ENCODE measurements at regions of chr5 and their contacts with region 1.

Region 1: DNA sequence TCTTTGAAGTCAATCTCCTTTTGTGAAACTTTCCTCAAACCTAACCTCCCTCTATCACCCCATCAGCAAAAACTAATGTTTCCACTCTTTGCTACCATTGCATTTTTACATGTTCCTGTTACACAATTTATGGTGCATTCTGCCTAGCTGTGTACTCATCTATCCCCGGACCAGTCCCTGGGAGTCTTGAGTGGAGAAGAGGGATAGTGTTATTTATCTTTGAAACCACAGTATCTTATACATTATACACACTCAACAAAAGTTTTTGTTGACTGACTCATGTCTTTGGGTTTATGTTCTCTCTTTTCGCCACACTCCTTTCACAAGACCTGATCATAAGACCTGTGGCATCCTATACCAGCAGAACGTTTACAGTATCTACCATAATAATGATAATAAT is 26.4 kb downstream of the TNFAIP8 start:
- DNase-seq: no peak
- H3K4me3 ChIP-seq: no peak overlapping the region
- H3K27ac ChIP-seq: no peak overlapping the region
- H3K4me1 ChIP-seq: peaks cover 7% of the 10 kb centered on the region
- H3K27me3 ChIP-seq: no peaks in the 10 kb centered on the region
- CTCF ChIP-seq: no peak
- POLR2A ChIP-seq: no peak

Region 2: DNA sequence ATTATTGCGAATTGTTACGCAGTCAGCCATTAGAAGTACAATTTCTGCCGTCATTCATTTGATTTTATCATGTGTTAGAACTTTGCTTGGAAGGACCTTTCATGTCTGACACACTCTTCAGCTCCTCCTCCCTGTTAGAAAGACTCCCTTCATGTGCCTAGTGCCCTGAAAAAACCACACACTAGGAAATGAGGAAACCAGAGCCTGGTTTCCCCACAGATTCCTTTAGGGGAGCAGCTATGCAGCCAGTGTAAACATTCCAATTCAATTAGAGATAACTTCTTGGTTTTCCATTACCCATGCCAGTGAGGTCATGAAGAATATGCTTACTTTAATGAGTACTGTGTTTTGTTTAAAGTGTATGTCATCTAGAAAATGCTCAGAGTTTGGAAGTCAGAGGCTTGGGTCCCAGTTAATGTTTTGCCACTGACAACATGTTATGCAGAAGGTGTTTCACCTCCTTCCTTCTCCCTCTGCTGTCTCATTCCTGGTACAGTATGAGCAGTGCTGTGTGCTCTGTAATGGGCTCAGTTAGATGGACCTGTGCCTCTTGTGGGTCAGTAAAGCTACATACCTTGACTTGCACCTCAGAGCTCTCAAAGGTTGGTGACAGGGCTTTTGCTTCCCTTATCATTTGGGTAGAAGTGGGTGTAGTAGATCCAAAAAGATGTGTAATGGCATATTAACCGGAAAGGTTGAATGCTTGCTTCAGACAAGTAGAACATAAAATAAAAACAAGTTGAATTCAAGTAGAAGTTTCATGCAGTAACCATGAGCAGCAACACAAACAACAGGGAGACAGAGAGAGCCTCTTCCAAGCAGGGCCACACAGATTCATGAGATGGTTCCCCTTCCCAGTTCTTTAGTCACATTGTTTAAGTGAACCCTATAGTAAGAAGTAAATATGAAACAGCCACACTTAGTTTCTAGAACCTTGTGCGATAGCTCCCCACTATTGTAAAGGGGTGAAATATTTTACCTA is 79.0 kb before region 1 on chr5:
- CTCF ChIA-PET with region 1: no interaction called
- POLR2A ChIA-PET with region 1: no interaction called
- dilution Hi-C with region 1: no loop called
- intact Hi-C with region 1: no loop called
- DNase-seq: peak; percentile 93
- H3K4me3 ChIP-seq: no peak overlapping the region
- H3K27ac ChIP-seq: peak overlapping the region; percentile 79
- H3K4me1 ChIP-seq: peaks cover 35% of the 10 kb centered on the region
- H3K27me3 ChIP-seq: no peaks in the 10 kb centered on the region
- CTCF ChIP-seq: no peak
- POLR2A ChIP-seq: no peak

Region 3: DNA sequence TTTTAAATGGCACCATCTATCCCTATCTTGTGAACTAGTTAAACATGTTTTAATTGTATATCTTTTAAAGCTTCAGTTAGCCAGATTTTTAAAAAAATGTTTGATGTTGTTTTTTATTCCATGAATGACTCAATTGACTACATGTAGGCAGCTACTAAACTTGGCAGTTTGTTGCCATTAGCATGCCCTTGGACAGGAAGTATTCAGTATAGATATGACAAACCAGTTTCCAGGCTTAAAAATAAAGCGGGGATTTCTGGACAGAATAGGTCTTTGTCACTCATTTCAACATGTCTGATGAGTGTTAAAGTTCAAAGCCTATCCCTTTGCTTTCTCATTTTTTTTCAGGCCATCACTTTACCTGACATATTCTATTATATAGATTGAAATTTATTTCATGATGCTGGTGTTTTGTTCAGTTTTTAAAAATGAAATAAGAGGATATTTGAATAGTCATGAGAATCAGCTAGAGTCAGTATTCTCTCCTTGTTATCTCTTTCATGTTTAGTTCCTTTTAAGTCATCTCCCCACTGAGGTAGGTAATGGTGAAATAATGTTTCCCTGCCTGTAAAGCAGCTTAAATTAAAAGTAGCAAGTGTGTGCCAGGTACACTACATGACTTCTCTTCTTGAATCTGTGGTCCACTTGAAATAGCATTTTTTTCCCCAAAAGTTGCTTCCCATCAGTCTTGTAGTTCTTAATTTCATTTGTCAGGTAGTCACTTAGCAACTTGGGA is 14.5 kb before region 1 on chr5:
- CTCF ChIA-PET with region 1: interaction called, 4 read pairs
- POLR2A ChIA-PET with region 1: no interaction called
- dilution Hi-C with region 1: no loop called
- intact Hi-C with region 1: loop called (anchors 2 kb)
- DNase-seq: peak; percentile 75
- H3K4me3 ChIP-seq: no peak overlapping the region
- H3K27ac ChIP-seq: no peak overlapping the region
- H3K4me1 ChIP-seq: peaks cover 7% of the 10 kb centered on the region
- H3K27me3 ChIP-seq: no peaks in the 10 kb centered on the region
- CTCF ChIP-seq: no peak
- POLR2A ChIP-seq: no peak

Region 4: DNA sequence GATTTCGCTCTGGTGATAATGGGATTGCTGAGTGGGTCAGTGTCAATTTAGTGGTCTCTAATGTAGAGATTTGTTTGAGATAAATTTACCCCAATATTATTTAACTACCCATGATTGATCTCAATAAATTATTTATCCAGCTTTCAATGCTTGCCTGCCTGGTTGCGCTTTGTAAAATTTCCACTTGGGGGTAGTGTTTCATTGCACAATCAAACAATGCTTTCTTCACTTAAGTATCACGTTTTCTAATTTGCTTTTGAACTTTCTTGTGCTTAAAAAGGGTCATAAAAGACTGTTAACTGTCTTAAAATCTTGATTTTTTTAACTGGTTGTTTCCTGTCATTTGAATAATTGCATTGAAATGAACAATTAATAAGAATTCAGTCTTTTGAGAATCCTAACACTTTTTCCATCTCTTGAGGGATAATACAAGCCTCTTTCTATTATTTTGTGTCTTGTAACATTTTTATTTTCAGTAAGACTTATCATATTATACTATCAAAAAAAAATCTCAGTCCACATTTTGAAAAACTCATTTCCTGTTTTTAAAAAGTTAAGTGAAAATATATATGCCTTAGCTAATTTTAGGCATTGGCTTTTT is 88.8 kb after region 1 on chr5:
- CTCF ChIA-PET with region 1: no interaction called
- POLR2A ChIA-PET with region 1: no interaction called
- dilution Hi-C with region 1: no loop called
- intact Hi-C with region 1: no loop called
- DNase-seq: peak; percentile 60
- H3K4me3 ChIP-seq: no peak overlapping the region
- H3K27ac ChIP-seq: no peak overlapping the region
- H3K4me1 ChIP-seq: peaks cover 2% of the 10 kb centered on the region
- H3K27me3 ChIP-seq: no peaks in the 10 kb centered on the region
- CTCF ChIP-seq: peak; percentile 55 to 57
- POLR2A ChIP-seq: no peak

Region 5: GRCh38 chr5:119583684-119584083 is 201.5 kb after region 1 on chr5:
- CTCF ChIA-PET with region 1: no interaction called
- POLR2A ChIA-PET with region 1: no interaction called
- dilution Hi-C with region 1: no loop called
- intact Hi-C with region 1: no loop called
- DNase-seq: no peak
- H3K4me3 ChIP-seq: no peak overlapping the region
- H3K27ac ChIP-seq: no peak overlapping the region
- H3K4me1 ChIP-seq: no peaks in the 10 kb centered on the region
- H3K27me3 ChIP-seq: no peaks in the 10 kb centered on the region
- CTCF ChIP-seq: no peak
- POLR2A ChIP-seq: no peak

Region 6: GRCh38 chr5:119694284-119694683 is 312.1 kb after region 1 on chr5:
- CTCF ChIA-PET with region 1: no interaction called
- POLR2A ChIA-PET with region 1: no interaction called
- dilution Hi-C with region 1: no loop called
- intact Hi-C with region 1: no loop called
- DNase-seq: no peak
- H3K4me3 ChIP-seq: no peak overlapping the region
- H3K27ac ChIP-seq: no peak overlapping the region
- H3K4me1 ChIP-seq: no peaks in the 10 kb centered on the region
- H3K27me3 ChIP-seq: no peaks in the 10 kb centered on the region
- CTCF ChIP-seq: no peak
- POLR2A ChIP-seq: no peak